ENCODE measurements at regions of chr16 and their contacts with region 1.

Region 1: DNA sequence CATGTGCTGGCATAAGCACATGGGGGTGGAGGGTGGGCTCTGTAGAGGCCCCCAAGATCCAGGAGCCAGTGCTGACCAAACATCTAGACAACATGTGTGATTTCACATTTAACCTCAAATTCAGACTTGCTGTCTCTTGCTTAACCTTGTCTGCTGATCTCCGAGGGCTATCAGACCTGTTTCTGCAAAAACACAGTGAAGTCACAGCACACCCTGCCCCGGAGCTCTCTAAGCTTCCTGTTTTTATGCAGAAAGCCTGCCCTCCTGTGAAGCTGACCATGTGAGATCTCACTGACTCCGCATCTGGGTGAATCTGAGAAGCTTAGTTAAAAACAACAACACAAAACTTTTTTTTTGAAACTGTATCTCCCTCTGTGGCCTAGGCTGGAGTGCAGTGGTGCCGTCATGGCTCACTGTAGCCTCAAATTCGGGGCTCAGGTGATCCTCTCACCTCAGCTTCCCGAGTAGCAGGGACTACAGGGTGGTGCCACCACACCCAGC is 6.6 kb upstream of the DPEP2 start:
- DNase-seq: no peak
- ATAC-seq: peak; percentile 54
- H3K4me3 ChIP-seq: no peak overlapping the region
- H3K27ac ChIP-seq: no peak overlapping the region
- H3K4me1 ChIP-seq: no peaks in the 10 kb centered on the region
- H3K27me3 ChIP-seq: peaks cover 7% of the 10 kb centered on the region
- CTCF ChIP-seq: no peak
- POLR2A ChIP-seq: no peak
- RAD21 ChIP-seq: no peak

Region 2: DNA sequence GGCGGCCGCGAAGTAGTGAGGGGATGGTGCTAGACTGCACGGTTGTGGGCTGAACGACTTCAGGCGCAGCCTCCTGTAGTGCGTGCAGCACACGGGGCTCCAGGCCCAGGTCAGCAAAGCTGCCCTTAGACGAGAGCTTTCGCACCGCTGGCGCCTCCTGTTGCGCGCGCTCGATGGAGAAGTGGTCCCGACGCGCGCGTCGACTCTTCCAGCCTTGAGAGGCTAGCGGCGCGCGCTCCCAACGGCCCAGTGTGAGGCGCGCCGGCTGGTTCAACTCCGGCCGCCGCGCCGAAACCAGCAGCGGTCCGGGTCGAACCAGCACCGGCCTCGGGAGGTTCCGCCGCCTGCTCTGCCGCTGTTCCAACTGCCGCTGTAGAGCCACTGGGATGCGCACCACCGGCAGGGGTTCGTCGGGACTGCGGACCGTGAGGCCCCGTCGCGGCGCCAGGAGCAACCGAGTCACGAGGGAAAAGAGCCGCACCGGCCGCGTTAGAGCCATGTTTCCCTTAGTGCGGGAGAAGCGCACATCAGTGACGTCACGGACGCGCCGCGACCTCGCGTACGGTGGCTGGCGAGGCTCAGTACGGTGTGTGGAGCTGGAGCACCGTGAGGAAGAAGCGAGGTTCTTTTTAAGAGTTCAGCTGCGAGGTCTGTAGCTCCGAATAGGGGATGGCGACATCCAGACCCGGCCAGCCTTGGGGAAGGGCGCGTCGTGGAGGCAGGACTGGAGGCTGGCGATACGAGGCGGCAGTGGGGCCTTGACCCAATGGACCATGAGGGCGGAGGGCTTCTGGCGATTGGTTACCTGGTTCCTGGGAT is 17.1 kb after region 1 on chr16 and contains the starts of genes DDX28 and DUS2:
- CTCF ChIA-PET with region 1: no interaction called
- POLR2A ChIA-PET with region 1: interaction called, 19 read pairs
- dilution Hi-C with region 1: no loop called
- in situ Hi-C with region 1: no loop called
- intact Hi-C with region 1: no loop called
- DNase-seq: peak; percentile 91
- ATAC-seq: peak; percentile 97
- H3K4me3 ChIP-seq: peak within 1 kb of the TSS; percentile 82
- H3K27ac ChIP-seq: peak within 1 kb of the TSS; percentile 83
- H3K4me1 ChIP-seq: peaks cover 7% of the 10 kb centered on the region
- H3K27me3 ChIP-seq: no peaks in the 10 kb centered on the region
- CTCF ChIP-seq: no peak
- POLR2A ChIP-seq: peak; percentile 77; the same call in 1 of the 2 replicates
- RAD21 ChIP-seq: no peak
- total RNA-seq, gene DDX28: 8.9 and 10.0 TPM in 2 replicates
- total RNA-seq, gene DUS2: 28.1 and 30.5 TPM in 2 replicates